Heart left ventricle (tissue), 16 donors: ENCODE measurements at regions of chr20 and their contacts with region 1.

Region 1: GRCh38 chr20:48597405-48598302 is 230.1 kb downstream of the PREX1 start:
- DNase-seq: no peak
- ATAC-seq: peak in 1 of 4 donors; percentile 14
- H3K4me3 ChIP-seq: no peak overlapping the region
- H3K27ac ChIP-seq: no peak overlapping the region
- H3K4me1 ChIP-seq: no peaks in the 10 kb centered on the region
- H3K27me3 ChIP-seq: peaks cover 0 to 3% (median 0%) of the 10 kb centered on the region in 9 donors
- CTCF ChIP-seq: no peak
- POLR2A ChIP-seq: no peak

Region 2: GRCh38 chr20:47792021-47792618 is 805.5 kb before region 1 on chr20:
- intact Hi-C with region 1: no loop called
- DNase-seq: peak; percentile 42 to 83 (median 75)
- ATAC-seq: peak; percentile 70 to 91 (median 86)
- H3K4me3 ChIP-seq: no peak overlapping the region
- H3K27ac ChIP-seq: peak overlapping the region in 3 of 12 donors; percentile 9 to 70 (median 48)
- H3K4me1 ChIP-seq: peaks cover 0 to 20% (median 4%) of the 10 kb centered on the region in 12 donors
- H3K27me3 ChIP-seq: peaks cover 0 to 7% (median 0%) of the 10 kb centered on the region in 9 donors
- CTCF ChIP-seq: no peak
- POLR2A ChIP-seq: no peak

Region 3: GRCh38 chr20:48210155-48211027 is 387.3 kb before region 1 on chr20:
- intact Hi-C with region 1: loop called in 2 of 10 experiments (anchors 5 kb)
- DNase-seq: peak in 3 of 5 donors; percentile 16 to 55 (median 45)
- ATAC-seq: peak in 1 of 4 donors; percentile 53
- H3K4me3 ChIP-seq: no peak overlapping the region
- H3K27ac ChIP-seq: no peak overlapping the region
- H3K4me1 ChIP-seq: peaks cover 0 to 3% (median 0%) of the 10 kb centered on the region in 12 donors
- H3K27me3 ChIP-seq: peaks cover 0 to 8% (median 0%) of the 10 kb centered on the region in 9 donors
- CTCF ChIP-seq: no peak
- POLR2A ChIP-seq: no peak